ENCODE measurements at regions of chr2 and their contacts with region 1.

Region 1: DNA sequence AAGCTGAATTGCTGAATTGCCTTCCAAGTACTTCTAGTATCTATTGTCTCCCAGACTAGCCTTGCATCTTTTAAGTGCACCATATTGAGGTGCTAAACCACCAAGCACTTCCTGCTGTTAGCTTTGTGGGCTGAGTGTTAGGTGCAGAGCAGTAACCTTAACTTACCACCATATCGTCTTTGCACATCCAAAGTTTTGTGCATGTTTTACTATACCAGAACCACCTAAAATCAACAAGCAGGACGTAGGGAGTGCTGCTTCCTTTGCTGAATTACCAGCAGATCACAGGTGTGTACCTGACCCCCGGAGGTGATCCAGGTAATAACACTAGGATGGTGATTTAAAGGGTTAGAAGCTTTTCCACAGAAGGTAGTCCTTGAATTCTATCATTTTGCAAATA is 359.9 kb upstream of the HNRNPA3 start:
- DNase-seq: no peak
- H3K4me3 ChIP-seq: no peak overlapping the region
- H3K27ac ChIP-seq: no peak overlapping the region
- H3K4me1 ChIP-seq: peaks cover 9% of the 10 kb centered on the region
- H3K27me3 ChIP-seq: no peaks in the 10 kb centered on the region
- CTCF ChIP-seq: no peak

Region 2: DNA sequence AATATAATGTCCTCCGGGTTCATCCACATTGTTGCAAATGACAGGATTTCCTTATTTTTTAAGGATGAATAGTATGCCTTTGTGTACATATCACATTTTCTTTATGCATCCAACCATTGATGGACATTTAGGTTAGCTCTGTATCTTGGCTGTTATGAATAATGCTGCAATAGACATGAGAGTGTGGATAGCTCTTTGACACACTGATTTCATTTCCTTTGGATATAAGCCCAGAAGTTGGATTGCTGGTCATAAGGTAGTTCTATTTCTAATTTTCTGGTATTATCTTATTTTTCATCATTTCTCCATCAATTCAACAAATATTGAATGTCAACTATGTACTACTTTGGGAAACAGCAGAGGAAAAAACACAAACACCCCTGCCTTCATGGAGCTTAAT is 160.1 kb before region 1 on chr2:
- CTCF ChIA-PET with region 1: no interaction called
- POLR2A ChIA-PET with region 1: no interaction called
- intact Hi-C with region 1: no loop called
- DNase-seq: no peak
- H3K4me3 ChIP-seq: no peak overlapping the region
- H3K27ac ChIP-seq: peak overlapping the region; percentile 41
- H3K4me1 ChIP-seq: peaks cover 81% of the 10 kb centered on the region
- H3K27me3 ChIP-seq: no peaks in the 10 kb centered on the region
- CTCF ChIP-seq: no peak

Region 3: DNA sequence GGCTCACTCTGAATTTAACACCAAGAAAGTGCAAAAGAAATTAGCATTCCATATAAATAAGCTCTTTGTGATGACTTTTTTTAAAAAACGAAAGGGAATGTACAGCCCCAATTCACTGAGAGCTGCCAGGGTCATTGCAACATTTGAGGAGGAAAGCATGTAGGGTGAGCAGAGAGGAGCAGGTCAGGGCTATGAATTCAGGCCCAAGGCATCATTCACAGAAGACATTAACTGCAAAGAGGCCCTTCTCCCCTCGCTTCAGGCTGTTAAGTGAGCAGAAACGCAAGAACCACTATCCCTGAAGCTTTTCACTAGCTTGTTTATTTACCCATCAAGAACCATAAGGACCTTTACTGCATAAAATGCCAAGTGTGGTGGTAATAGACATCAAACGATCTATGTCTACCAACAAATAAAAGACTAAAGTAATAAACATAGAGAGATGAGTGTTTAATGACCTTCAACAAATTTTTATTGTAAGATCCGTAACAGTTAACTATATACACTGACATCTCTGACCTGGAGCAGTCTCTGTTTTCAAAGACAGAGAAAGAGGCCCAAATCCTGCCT is 26.8 kb after region 1 on chr2:
- CTCF ChIA-PET with region 1: interaction called, 11 read pairs
- POLR2A ChIA-PET with region 1: no interaction called
- intact Hi-C with region 1: no loop called
- DNase-seq: no peak
- H3K4me3 ChIP-seq: no peak overlapping the region
- H3K27ac ChIP-seq: no peak overlapping the region
- H3K4me1 ChIP-seq: no peaks in the 10 kb centered on the region
- H3K27me3 ChIP-seq: no peaks in the 10 kb centered on the region
- CTCF ChIP-seq: no peak